Activated CD4-positive, alpha-beta memory T cell treated with anti-CD3 and anti-CD28 coated beads, Interleukin-2, amount 10 ng/mL, durations not matched to agents 7 days and 5 days (primary cell): ENCODE measurements at regions of chr18 and their contacts with region 1.

Region 1: GRCh38 chr18:13273800-13274199 is 55.2 kb downstream of the LDLRAD4 start:
- DNase-seq: peak; percentile 45
- H3K4me3 Mint-ChIP-seq: peak overlapping the region; percentile 72
- H3K27ac Mint-ChIP-seq: peak overlapping the region; percentile 80
- H3K4me1 Mint-ChIP-seq: peaks cover 63% of the 10 kb centered on the region
- H3K27me3 Mint-ChIP-seq: no peaks in the 10 kb centered on the region

Region 2: GRCh38 chr18:13289481-13290205 is 15.8 kb after region 1 on chr18:
- CTCF ChIA-PET with region 1: interaction called, 6 read pairs
- POLR2A ChIA-PET with region 1: interaction called, 17 read pairs
- DNase-seq: no peak
- H3K4me3 Mint-ChIP-seq: no peak overlapping the region
- H3K27ac Mint-ChIP-seq: peak overlapping the region; percentile 38
- H3K4me1 Mint-ChIP-seq: peaks cover 71% of the 10 kb centered on the region
- H3K27me3 Mint-ChIP-seq: no peaks in the 10 kb centered on the region

Region 3: DNA sequence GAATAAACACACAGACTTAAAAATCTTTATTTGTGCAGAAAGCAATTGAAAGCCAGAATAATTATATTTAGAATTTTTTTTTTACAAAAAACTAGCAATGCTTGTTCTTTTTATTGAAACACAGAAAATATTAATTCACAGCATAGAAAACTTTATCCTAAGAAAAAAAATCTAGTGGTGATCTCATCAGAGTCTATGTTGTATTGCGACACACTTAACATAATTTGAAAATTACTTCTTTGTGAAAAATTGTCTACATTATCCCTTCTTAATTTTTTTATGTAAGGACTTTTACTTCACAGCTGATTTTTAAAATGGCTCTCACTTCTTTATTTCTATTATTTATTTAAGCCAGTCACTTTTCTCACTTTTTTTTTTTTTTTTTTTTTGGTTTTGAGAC is 48.1 kb after region 1 on chr18:
- CTCF ChIA-PET with region 1: no interaction called
- POLR2A ChIA-PET with region 1: no interaction called
- DNase-seq: no peak
- H3K4me3 Mint-ChIP-seq: no peak overlapping the region
- H3K27ac Mint-ChIP-seq: no peak overlapping the region
- H3K4me1 Mint-ChIP-seq: no peaks in the 10 kb centered on the region
- H3K27me3 Mint-ChIP-seq: no peaks in the 10 kb centered on the region